Aorta (tissue), 5 donors: ENCODE measurements at regions of chr15 and their contacts with region 1.

Region 1: GRCh38 chr15:23372284-23372683 is 17.7 kb downstream of the GOLGA8S start:
- DNase-seq: peak; percentile 67 to 79
- ATAC-seq: peak; percentile 33
- H3K4me3 ChIP-seq: no peak overlapping the region
- H3K27ac ChIP-seq: peak overlapping the region; percentile 30 to 64
- H3K4me1 ChIP-seq: peaks cover 0 to 2% of the 10 kb centered on the region in 2 donors
- H3K27me3 ChIP-seq: no peaks in the 10 kb centered on the region

Region 2: DNA sequence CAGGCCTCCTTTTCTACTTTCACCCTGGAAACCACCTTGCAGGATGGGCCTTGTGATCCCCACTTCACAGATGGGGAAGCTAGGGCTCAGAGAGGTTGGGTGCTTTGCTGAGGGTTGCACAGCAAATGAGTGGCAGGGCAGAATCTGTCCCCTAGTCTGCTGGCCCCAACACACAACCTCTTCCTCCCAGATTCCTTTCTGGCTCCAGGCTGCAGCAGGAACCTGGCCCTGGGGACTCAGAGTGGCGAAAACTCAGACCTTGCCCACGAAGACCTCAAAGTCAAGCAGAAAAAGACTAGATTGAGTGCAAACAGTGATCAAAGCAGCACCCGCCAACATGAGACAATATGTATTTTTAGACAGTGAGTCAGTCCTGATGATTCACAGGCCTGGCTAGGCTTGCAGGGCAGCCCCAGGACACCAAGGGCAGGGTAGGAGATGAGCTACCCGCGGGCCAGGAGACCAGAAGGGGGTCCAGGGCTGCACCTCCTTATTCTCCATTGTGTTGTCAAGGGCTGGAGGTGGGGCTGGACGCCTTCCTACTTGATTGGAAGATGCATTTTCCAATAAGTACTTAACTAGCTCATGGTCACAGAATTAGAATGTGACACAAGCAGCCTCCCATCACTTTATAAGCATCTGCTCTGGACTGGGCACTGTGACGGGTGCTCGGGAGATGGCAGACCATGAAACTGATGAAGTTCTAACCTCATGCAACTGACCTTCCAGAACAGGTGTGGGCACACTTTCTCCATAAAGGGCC is 50.8 kb after region 1 on chr15:
- intact Hi-C with region 1: loop called in 1 of 2 experiments (anchors 10 kb)
- DNase-seq: peak in 1 of 2 donors; percentile 64
- ATAC-seq: peak; percentile 89
- H3K4me3 ChIP-seq: no peak overlapping the region
- H3K27ac ChIP-seq: peak overlapping the region; percentile 47 to 94
- H3K4me1 ChIP-seq: peaks cover 0 to 2% of the 10 kb centered on the region in 2 donors
- H3K27me3 ChIP-seq: no peaks in the 10 kb centered on the region

Region 3: DNA sequence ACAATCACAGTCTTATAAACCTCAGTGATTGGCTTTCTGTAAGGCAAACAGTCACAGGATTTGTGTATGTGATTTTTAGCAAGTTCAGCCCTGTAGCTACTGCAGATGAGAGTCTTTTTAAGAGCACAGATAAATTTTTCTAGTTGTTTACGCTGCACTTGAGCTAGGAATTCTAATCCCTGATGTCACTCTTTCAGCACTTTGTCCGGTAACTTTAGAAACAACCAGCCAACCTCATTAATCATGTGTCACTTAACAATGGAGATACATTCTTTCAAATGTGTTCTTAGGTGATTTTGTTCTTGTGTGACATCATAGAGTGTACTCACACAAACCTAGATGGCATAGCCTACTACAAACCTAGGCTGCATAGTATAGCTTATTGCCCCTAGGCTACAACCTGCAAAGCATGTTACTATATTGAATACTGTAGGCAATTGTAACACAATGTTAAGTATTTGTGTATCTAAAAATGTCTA is 111.6 kb after region 1 on chr15:
- intact Hi-C with region 1: no loop called
- DNase-seq: no peak
- ATAC-seq: no peak
- H3K4me3 ChIP-seq: no peak overlapping the region
- H3K27ac ChIP-seq: no peak overlapping the region
- H3K4me1 ChIP-seq: no peaks in the 10 kb centered on the region
- H3K27me3 ChIP-seq: no peaks in the 10 kb centered on the region